Heart right ventricle (tissue), 16 donors: ENCODE measurements at regions of chr1 and their contacts with region 1.

Region 1: DNA sequence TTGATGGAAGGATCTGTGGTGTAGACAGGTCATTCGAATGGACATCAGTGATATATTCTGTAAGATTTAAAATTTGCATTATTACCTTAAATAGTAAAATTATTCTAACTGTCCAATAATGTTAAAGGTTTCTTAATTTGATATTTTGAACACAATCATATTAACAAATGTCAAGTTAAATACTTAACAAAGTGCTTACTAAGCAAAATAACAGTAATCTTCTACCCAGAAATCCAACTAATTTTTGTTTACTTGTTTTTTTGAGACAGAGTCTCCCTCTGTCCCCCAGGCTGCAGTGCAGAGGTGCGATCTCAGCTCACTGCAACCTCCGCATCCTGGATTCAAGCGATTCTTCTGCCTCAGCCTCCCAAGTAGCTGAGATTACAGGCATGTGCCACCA is 33.9 kb downstream of the USP33 start:
- DNase-seq: no peak
- ATAC-seq: no peak
- H3K4me3 ChIP-seq: no peak overlapping the region
- H3K27ac ChIP-seq: no peak overlapping the region
- H3K4me1 ChIP-seq: peaks cover 0 to 3% (median 0%) of the 10 kb centered on the region in 9 donors
- H3K27me3 ChIP-seq: no peaks in the 10 kb centered on the region
- CTCF ChIP-seq: no peak

Region 2: GRCh38 chr1:77910116-77910515 is 184.4 kb after region 1 on chr1:
- intact Hi-C with region 1: loop called in 1 of 10 experiments (anchors 10 kb)
- DNase-seq: no peak
- ATAC-seq: no peak
- H3K4me3 ChIP-seq: no peak overlapping the region
- H3K27ac ChIP-seq: peak overlapping the region in 1 of 10 donors; percentile 20
- H3K4me1 ChIP-seq: peaks cover 0 to 5% (median 0%) of the 10 kb centered on the region in 9 donors
- H3K27me3 ChIP-seq: no peaks in the 10 kb centered on the region
- CTCF ChIP-seq: no peak